PC-9 (cell line): ENCODE measurements at regions of chr15 and their contacts with region 1.

Region 1: GRCh38 chr15:35595656-35596055 is 49.7 kb upstream of the DPH6 start:
- DNase-seq: no peak
- H3K4me3 ChIP-seq: no peak overlapping the region
- H3K27ac ChIP-seq: no peak overlapping the region
- H3K4me1 ChIP-seq: no peaks in the 10 kb centered on the region
- H3K27me3 ChIP-seq: no peaks in the 10 kb centered on the region
- CTCF ChIP-seq: no peak

Region 2: DNA sequence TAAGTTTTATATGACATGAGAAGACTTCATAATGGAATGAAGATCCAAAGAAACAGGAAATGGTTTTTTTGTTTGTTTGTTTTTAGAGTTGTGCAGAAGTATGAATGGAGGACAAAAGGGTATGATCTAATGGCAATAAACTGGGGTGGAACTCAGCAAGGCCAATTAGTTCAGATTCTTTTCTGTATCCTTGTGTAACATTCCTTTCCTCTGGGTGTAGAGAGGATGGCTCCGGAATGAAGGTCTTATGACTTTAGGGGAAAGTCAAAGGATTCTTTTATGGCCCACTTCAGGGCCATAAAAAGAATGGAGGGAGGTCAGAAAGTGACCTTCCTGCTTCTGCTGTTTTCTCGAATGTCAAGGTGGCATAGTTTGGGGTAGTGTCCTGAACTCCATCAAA is 202.3 kb before region 1 on chr15:
- CTCF ChIA-PET with region 1: no interaction called
- POLR2A ChIA-PET with region 1: no interaction called
- intact Hi-C with region 1: no loop called
- DNase-seq: no peak
- H3K4me3 ChIP-seq: no peak overlapping the region
- H3K27ac ChIP-seq: no peak overlapping the region
- H3K4me1 ChIP-seq: no peaks in the 10 kb centered on the region
- H3K27me3 ChIP-seq: no peaks in the 10 kb centered on the region
- CTCF ChIP-seq: no peak

Region 3: DNA sequence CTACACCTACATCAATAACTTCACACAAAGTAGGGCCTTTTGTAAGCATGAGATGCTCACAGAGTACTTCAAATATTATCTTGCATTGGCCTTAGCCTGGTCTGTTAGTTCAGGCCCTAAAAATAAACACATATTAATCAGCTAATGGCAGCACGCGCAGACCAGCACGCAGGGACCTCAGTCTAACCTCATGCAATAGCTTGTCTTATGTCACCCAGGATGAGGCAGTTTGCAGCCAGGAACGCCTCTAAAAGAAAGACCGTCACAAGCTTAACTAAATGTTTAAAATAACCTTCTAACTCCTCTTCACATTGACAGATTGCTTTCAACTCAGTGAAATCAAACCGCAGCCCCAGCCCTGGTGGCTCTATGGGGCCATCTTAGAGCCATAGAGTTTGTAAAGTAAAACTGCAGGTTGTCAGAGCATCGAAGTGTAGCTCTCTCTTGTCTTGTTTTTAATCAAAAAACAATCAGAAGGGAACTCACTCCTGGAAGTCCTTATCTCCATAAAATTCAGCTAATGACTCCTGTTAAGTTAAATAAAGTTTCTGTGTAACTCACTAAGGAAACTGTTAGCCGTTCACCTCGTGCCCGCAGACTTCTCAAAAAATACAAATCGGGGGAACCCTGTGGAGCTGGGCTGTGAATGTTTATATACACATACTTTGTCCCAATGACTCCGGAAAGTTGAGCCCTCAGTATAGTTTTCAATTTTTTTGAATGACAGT is 1196.4 kb after region 1 on chr15:
- CTCF ChIA-PET with region 1: no interaction called
- POLR2A ChIA-PET with region 1: interaction called, 20 read pairs
- intact Hi-C with region 1: no loop called
- DNase-seq: no peak
- H3K4me3 ChIP-seq: no peak overlapping the region
- H3K27ac ChIP-seq: no peak overlapping the region
- H3K4me1 ChIP-seq: no peaks in the 10 kb centered on the region
- H3K27me3 ChIP-seq: no peaks in the 10 kb centered on the region
- CTCF ChIP-seq: no peak